Transverse colon (tissue), 4 donors: ENCODE measurements at regions of chr3 and their contacts with region 1.

Region 1: DNA sequence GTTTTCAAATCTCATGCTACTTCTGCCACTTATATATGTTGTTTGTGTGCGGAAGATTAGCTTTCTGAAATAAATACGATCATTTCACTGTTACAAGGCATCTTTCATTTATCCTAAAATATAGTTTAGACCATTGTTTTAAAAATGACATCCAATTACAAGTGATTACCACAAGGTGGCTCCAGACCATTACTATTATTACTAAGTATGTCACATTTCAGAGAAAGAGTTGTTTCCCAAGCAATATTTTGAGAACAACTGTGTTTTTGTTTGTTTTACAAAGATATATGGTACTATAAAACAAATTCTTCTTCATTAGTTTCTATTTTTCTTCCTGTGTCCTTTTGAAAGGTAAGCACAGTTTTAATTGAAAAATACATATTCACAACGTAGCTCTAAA is 136.0 kb upstream of the RAP2B start:
- DNase-seq: no peak
- H3K4me3 ChIP-seq: no peak overlapping the region
- H3K27ac ChIP-seq: no peak overlapping the region
- H3K4me1 ChIP-seq: no peaks in the 10 kb centered on the region
- H3K27me3 ChIP-seq: no peaks in the 10 kb centered on the region
- CTCF ChIP-seq: peak; percentile 58 to 67 (median 59)
- EP300 ChIP-seq: no peak
- POLR2A ChIP-seq: no peak

Region 2: DNA sequence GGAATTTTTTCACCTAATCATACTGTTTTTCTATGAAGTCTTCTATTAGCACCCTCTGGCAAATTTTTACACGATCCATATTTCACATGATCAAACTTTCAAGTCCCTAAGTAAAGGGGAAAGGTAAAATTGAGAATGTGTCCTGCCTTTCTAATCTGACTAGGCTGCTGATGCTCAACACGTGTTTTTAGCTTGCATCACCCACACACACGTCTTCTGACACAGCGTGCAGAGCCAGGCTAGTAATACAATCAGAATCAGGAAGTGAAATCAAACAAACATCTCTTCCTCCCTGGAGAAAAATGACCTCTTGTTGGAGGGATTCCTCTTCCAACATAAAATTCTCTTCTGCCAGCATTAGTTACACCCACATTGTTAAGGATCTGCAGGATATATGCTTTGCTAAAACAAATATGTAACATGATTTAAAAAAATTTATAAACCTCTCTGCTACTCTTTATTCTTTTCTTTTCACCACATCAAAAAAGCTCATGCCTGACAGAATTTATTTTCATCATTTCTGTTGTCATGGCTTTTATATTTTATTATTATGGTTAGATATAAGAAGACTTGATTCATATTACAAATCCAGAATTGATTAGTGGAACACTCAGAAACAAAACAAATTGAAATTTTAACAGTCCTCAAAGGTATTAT is 258.4 kb after region 1 on chr3:
- in situ Hi-C with region 1: loop called in 3 of 4 experiments (anchors 25 kb)
- intact Hi-C with region 1: no loop called
- DNase-seq: peak; percentile 22
- H3K4me3 ChIP-seq: no peak overlapping the region
- H3K27ac ChIP-seq: peak overlapping the region in 2 of 4 donors; percentile 33 to 43
- H3K4me1 ChIP-seq: peaks cover 0 to 8% (median 0%) of the 10 kb centered on the region in 4 donors
- H3K27me3 ChIP-seq: no peaks in the 10 kb centered on the region
- CTCF ChIP-seq: no peak
- EP300 ChIP-seq: no peak
- POLR2A ChIP-seq: no peak

Region 3: GRCh38 chr3:153595186-153595815 is 569.3 kb after region 1 on chr3:
- in situ Hi-C with region 1: loop called (anchors 10 to 25 kb)
- intact Hi-C with region 1: no loop called
- DNase-seq: no peak
- H3K4me3 ChIP-seq: no peak overlapping the region
- H3K27ac ChIP-seq: no peak overlapping the region
- H3K4me1 ChIP-seq: peaks cover 0 to 4% (median 0%) of the 10 kb centered on the region in 4 donors
- H3K27me3 ChIP-seq: no peaks in the 10 kb centered on the region
- CTCF ChIP-seq: peak; percentile 44 to 57 (median 54)
- EP300 ChIP-seq: no peak
- POLR2A ChIP-seq: no peak

Region 4: GRCh38 chr3:153621953-153622352 is 595.9 kb after region 1 on chr3:
- in situ Hi-C with region 1: loop called in 2 of 4 experiments (anchors 25 kb)
- intact Hi-C with region 1: no loop called
- DNase-seq: no peak
- H3K4me3 ChIP-seq: no peak overlapping the region
- H3K27ac ChIP-seq: no peak overlapping the region
- H3K4me1 ChIP-seq: no peaks in the 10 kb centered on the region
- H3K27me3 ChIP-seq: no peaks in the 10 kb centered on the region
- CTCF ChIP-seq: no peak
- EP300 ChIP-seq: no peak
- POLR2A ChIP-seq: no peak

Region 5: DNA sequence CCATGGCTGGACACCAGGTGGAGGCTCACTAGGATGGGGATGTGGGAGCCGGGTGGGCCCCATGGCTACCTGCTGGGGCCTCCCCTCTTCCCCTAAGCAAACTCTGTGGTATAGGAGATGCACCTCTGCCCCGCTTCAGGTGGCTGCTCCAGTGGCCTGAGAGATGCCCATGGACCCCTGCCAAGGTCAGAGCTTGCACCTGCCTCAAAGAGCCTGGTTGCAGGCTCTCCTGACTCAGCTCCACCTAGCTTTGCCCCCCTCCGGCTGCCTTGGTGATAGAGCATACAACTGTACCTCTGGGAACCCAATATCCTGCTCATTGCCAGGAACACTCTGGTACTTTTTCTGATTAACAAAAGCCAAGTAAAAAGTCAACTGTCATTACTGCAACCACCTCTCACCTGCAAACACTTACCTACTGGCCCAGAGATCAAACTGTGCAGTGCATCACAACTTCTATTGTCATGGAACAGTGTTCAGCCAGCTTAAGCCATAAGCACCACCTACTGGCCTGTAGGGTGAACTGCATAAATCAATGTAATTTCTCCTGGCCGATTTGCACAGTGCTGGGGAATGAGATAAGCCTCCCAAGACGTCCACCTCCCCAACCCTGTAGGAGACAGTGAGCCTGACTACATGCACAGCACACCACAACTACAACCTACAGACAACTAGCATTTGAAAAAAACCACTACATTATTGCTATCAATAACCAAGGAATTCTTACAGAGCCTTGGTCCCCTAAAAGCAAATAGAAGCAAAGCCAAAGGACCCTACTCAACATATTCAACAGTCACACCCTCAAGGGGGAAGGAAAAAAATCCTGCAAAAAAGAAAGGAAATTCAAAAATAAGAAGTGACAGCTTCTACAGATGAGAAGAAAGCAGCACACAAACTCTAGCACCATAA is 742.8 kb after region 1 on chr3:
- in situ Hi-C with region 1: loop called in 2 of 4 experiments (anchors 10 to 25 kb)
- intact Hi-C with region 1: no loop called
- DNase-seq: peak; percentile 39
- H3K4me3 ChIP-seq: no peak overlapping the region
- H3K27ac ChIP-seq: no peak overlapping the region
- H3K4me1 ChIP-seq: no peaks in the 10 kb centered on the region
- H3K27me3 ChIP-seq: no peaks in the 10 kb centered on the region
- CTCF ChIP-seq: peak; percentile 79 to 87 (median 84)
- EP300 ChIP-seq: no peak
- POLR2A ChIP-seq: no peak

Region 6: DNA sequence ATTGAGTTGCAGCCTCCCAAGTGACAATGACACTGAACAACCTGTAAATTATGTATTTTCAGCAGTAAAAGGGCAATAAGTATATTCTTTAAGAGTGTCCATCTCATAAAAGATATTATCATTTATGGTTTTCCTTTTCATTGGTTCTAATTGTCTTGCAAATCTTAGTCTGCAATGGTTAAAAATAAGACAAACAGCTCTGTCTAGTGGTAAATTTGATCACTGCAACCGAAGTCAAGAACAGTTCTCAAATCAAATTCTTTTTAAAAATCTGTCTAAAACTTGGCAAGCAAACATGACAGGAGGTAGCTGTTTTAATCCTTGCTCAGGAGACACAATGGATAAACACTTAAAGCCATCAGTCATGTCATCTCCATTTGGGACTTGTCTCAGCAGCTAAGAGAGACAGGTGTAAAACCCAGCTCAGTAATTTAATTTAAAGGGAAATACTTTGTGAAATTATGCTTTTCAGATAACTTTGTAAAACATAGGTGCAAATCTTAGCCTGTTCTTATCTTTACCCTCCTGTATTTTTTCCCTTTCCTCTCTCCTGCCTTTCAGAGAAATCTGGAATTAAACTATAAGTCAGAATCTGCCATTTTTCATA is 944.8 kb after region 1 on chr3:
- in situ Hi-C with region 1: loop called in 1 of 4 experiments (anchors 25 kb)
- intact Hi-C with region 1: no loop called
- DNase-seq: no peak
- H3K4me3 ChIP-seq: no peak overlapping the region
- H3K27ac ChIP-seq: no peak overlapping the region
- H3K4me1 ChIP-seq: no peaks in the 10 kb centered on the region
- H3K27me3 ChIP-seq: no peaks in the 10 kb centered on the region
- CTCF ChIP-seq: peak in 4 of 5 experiments; percentile 16 to 27 (median 20)
- EP300 ChIP-seq: no peak
- POLR2A ChIP-seq: no peak